ENCODE measurements at regions of chr20 and their contacts with region 1.

Region 1: DNA sequence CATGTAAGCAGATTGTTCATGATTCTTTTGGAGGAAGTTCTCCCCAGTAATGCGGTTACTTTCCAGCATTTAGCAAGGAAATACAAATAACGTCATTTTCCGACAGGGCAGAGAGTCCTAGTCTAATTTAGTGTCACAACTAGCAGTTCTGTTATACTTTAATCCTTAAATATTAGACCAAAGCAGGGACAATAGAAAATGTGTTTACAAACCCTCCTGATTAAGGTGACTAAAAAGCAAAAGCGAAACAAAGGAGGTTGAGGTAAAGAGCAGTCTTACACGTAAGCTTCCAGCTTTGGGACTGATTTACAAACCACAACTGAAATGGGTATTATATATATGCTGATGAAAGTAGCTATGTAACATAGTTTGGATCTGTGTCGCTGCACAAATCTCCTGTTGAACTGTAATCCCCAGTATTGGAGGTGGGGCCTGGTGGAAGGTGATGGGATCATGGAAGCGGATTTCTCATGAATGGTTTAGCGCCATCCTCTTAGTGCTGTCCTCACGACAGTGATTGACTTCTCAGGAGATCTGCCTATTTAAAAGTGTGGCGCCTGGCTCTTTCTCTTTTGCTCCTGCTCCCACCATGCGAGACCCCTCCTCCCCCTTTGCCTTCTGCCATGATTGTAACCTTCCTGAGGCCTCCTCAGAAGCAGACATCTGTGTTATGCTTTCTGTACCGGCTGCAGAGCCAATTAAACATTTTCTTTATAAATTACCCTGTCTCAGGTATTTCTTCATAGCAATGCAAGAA is 81.9 kb downstream of the PLCB1 start:
- DNase-seq: no peak
- H3K4me3 Mint-ChIP-seq: peak overlapping the region; percentile 55
- H3K27ac Mint-ChIP-seq: peak overlapping the region; percentile 24
- H3K4me1 Mint-ChIP-seq: peaks cover 45% of the 10 kb centered on the region
- H3K27me3 Mint-ChIP-seq: peaks cover 2% of the 10 kb centered on the region

Region 2: DNA sequence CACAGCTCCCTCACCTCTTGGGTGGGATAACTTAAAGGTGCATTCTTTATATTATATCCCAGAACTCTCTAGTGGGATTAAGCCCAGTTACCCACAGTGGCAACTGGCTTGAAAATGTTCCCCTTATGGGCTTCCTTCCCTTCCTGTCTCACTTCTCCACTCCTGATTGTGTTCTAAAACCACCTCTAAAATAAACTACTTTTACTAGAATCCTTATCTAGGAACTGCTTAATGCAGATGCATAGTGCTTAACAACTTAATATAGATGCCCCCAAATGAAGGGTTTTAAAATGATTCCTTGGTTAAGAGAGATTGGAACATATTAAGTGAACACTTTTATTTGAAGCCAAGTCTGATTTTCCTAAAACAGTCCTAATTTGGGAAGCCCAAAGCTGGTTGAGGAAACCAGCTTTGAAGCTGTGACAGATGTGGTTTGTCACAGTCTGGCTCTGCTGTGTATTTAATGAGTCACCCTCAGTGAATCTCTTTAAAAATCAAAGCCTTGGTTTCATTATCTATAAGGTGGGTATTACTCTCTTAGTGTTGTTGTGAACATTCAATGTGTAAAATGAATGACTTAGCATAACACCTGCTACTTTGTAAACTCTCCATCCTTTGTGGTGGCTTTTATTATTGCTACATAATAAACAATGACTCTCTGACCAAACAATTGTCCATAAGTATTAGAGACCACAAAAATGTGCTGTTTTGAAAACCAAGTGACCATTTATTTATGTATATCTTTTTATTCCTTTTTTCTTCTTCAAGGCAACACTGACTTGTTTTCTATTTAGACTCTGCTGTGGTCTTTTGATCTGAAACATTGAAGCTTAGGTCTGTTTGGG is 57.6 kb before region 1 on chr20:
- CTCF ChIA-PET with region 1: no interaction called
- POLR2A ChIA-PET with region 1: no interaction called
- intact Hi-C with region 1: loop called (anchors 2 kb)
- DNase-seq: no peak
- H3K4me3 Mint-ChIP-seq: no peak overlapping the region
- H3K27ac Mint-ChIP-seq: no peak overlapping the region
- H3K4me1 Mint-ChIP-seq: peaks cover 53% of the 10 kb centered on the region
- H3K27me3 Mint-ChIP-seq: no peaks in the 10 kb centered on the region

Region 3: GRCh38 chr20:8196096-8196495 is 17.9 kb before region 1 on chr20:
- CTCF ChIA-PET with region 1: no interaction called
- POLR2A ChIA-PET with region 1: no interaction called
- intact Hi-C with region 1: no loop called
- DNase-seq: no peak
- H3K4me3 Mint-ChIP-seq: no peak overlapping the region
- H3K27ac Mint-ChIP-seq: no peak overlapping the region
- H3K4me1 Mint-ChIP-seq: no peaks in the 10 kb centered on the region
- H3K27me3 Mint-ChIP-seq: no peaks in the 10 kb centered on the region

Region 4: GRCh38 chr20:8271727-8272126 is 57.7 kb after region 1 on chr20:
- CTCF ChIA-PET with region 1: no interaction called
- POLR2A ChIA-PET with region 1: no interaction called
- intact Hi-C with region 1: loop called (anchors 10 kb)
- DNase-seq: no peak
- H3K4me3 Mint-ChIP-seq: no peak overlapping the region
- H3K27ac Mint-ChIP-seq: no peak overlapping the region
- H3K4me1 Mint-ChIP-seq: peaks cover 25% of the 10 kb centered on the region
- H3K27me3 Mint-ChIP-seq: peaks cover 5% of the 10 kb centered on the region